ENCODE measurements at regions of chr12 and their contacts with region 1.

Region 1: DNA sequence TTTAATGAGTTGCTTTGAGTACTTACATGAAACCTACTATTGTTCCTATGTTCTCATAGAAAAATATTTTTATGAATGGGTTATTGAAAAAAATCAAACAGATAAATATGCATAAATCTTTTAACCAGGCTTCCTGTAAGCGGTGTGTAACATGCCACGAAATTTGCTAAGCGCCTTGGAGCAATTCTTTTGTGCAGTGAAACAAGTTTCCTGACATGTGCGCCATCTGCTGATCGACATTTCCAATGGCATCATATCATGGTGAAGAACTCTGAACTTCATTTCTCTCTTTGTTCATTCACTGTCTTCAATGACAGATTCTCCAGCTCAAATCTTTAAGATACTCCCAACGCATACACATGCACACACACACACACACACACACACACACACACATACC is 145.6 kb upstream of the NAV3 start:
- DNase-seq: peak in 3 of 4 donors; percentile 46 to 81 (median 49)
- ATAC-seq: peak; percentile 83
- H3K4me3 ChIP-seq: no peak overlapping the region
- H3K27ac ChIP-seq: no peak overlapping the region
- H3K4me1 ChIP-seq: no peaks in the 10 kb centered on the region
- H3K27me3 ChIP-seq: no peaks in the 10 kb centered on the region
- CTCF ChIP-seq: peak; percentile 13 to 35

Region 2: DNA sequence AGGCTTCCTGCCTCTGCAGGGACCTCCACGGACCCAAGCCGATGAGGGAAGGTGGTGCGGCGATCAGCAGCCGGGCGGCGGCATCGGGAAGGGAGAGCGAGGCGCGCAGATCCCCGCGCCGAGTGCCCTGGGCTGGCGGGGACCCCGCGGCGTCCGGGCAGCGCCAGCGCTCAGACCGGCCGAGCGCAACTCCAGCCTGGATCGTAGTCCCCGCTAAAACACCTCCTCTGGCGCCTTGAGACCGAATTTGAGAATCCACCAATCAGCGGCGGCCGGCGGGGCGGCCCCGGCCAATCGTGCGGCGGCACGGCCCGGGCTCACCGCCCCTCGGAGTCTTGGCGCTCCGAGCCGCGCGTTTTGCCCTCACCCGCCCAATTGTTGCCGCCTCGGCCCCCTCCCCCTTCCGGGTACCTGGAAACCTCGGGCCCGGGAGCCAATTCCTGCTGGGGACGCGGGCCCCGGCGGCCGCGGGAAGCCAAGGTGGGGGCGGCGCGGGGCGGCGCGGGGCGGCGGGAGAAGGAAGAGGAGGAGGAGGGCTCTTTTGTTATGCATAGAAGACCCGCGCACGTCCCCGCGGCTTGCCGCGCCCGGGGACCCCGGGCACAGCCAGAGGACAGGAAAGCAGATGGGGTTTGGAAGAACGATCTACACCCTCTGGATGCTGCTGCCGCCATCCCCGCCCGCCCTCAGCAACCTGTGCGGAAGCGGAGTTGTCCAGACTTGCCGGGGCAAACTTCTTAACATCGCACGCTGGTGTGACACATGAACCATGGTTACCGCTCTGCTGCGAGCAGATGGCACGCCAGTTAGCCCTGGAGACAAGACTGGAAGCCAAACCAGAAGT is 619.5 kb before region 1 on chr12 and contains the start of gene E2F7:
- intact Hi-C with region 1: loop called in 1 of 2 experiments (anchors 10 kb)
- DNase-seq: peak; percentile 82 to 94 (median 90)
- ATAC-seq: peak; percentile 96
- H3K4me3 ChIP-seq: peak within 1 kb of the TSS; percentile 70 to 88
- H3K27ac ChIP-seq: peak within 1 kb of the TSS in 1 of 2 donors; percentile 13
- H3K4me1 ChIP-seq: peaks cover 4 to 14% of the 10 kb centered on the region in 2 donors
- H3K27me3 ChIP-seq: peaks cover 0 to 24% of the 10 kb centered on the region in 2 donors
- CTCF ChIP-seq: no peak
- polyA plus RNA-seq, gene E2F7: 6.1 to 10.9 (median 7.2) TPM

Measured in left lung (tissue), 14 donors.